Activated B cell treated with CpG ODN at 0.5 μM for 24 hours (primary cell): ENCODE measurements at regions of chr1 and their contacts with region 1.

Region 1: DNA sequence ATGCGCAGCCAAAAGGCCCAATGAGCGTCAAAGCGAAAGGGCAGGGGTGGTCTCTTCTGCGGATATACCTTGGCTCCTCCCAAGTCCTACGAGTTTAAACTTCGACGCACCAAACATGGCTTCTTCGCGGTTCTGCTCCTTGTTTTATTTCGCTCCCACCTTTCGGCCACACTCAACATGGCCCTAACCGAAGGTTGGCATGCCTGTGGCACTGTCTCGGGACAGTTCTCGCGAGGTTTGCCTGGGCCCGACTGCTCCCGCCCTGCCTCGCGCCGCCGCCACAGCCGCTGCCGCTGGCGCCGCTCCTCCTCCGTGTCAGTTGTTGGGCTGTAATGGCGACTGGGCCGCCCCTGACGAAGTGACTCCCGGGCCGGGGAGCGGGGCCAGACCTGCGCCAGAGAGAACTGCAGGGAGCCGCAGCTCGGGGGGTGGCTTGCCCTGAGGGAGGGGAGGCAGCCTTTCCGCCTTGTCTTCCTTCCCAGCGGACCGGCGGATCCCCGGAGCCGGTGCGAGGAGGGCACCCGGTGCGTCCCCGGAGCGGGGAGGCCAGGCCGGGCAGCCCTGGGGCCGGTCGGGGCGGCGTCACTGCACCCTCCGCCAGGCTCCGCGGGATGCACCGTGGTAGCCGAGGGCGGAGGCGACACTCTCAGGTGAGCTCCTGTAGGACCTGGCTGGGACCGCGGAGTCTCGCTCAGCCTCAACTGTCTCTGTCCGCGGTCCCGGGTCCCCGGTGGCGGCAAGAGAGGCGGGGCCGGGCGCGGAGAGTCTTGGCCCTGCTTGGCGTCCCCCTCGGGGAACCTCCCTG is at the start of gene CEP350:
- DNase-seq: peak; percentile 91
- ATAC-seq: peak; percentile 90
- H3K4me3 Mint-ChIP-seq: peak within 1 kb of the TSS; percentile 81
- H3K27ac Mint-ChIP-seq: peak within 1 kb of the TSS; percentile 90
- H3K4me1 Mint-ChIP-seq: peaks cover 57% of the 10 kb centered on the region
- H3K27me3 Mint-ChIP-seq: no peaks in the 10 kb centered on the region
- CTCF ChIP-seq: no peak
- total RNA-seq, gene CEP350: 60.8 and 63.9 TPM in 2 replicates

Region 2: GRCh38 chr1:179293340-179294327 is 661.1 kb before region 1 on chr1 and contains the start of gene SOAT1:
- CTCF ChIA-PET with region 1: no interaction called
- POLR2A ChIA-PET with region 1: interaction called, 3 read pairs
- intact Hi-C with region 1: loop called (anchors 10 kb)
- DNase-seq: peak; percentile 92
- ATAC-seq: peak; percentile 99
- H3K4me3 Mint-ChIP-seq: peak within 1 kb of the TSS; percentile 97
- H3K27ac Mint-ChIP-seq: peak within 1 kb of the TSS; percentile 93
- H3K4me1 Mint-ChIP-seq: peaks cover 44% of the 10 kb centered on the region
- H3K27me3 Mint-ChIP-seq: no peaks in the 10 kb centered on the region
- CTCF ChIP-seq: no peak
- total RNA-seq, gene SOAT1: 17.3 and 20.0 TPM in 2 replicates

Region 3: GRCh38 chr1:179728271-179728670 is 226.4 kb before region 1 on chr1:
- CTCF ChIA-PET with region 1: no interaction called
- POLR2A ChIA-PET with region 1: no interaction called
- intact Hi-C with region 1: no loop called
- DNase-seq: no peak
- ATAC-seq: no peak
- H3K4me3 Mint-ChIP-seq: no peak overlapping the region
- H3K27ac Mint-ChIP-seq: no peak overlapping the region
- H3K4me1 Mint-ChIP-seq: no peaks in the 10 kb centered on the region
- H3K27me3 Mint-ChIP-seq: peaks cover 14% of the 10 kb centered on the region
- CTCF ChIP-seq: no peak

Region 4: GRCh38 chr1:179882243-179883039 is 72.3 kb before region 1 on chr1 and contains the start of gene TOR1AIP1:
- CTCF ChIA-PET with region 1: interaction called, 5 read pairs
- POLR2A ChIA-PET with region 1: interaction called, 95 read pairs
- intact Hi-C with region 1: loop called (anchors 1 kb)
- DNase-seq: peak; percentile 96
- ATAC-seq: peak; percentile 76
- H3K4me3 Mint-ChIP-seq: peak within 1 kb of the TSS; percentile 100
- H3K27ac Mint-ChIP-seq: peak within 1 kb of the TSS; percentile 100
- H3K4me1 Mint-ChIP-seq: peaks cover 64% of the 10 kb centered on the region
- H3K27me3 Mint-ChIP-seq: no peaks in the 10 kb centered on the region
- CTCF ChIP-seq: no peak
- total RNA-seq, gene TOR1AIP1: 42.3 and 46.6 TPM in 2 replicates

Region 5: GRCh38 chr1:180003026-180003695 is 48.5 kb after region 1 on chr1:
- CTCF ChIA-PET with region 1: no interaction called
- POLR2A ChIA-PET with region 1: interaction called, 5 read pairs
- intact Hi-C with region 1: loop called (anchors 2 kb)
- DNase-seq: no peak
- ATAC-seq: peak; percentile 61
- H3K4me3 Mint-ChIP-seq: no peak overlapping the region
- H3K27ac Mint-ChIP-seq: peak overlapping the region; percentile 47
- H3K4me1 Mint-ChIP-seq: peaks cover 20% of the 10 kb centered on the region
- H3K27me3 Mint-ChIP-seq: no peaks in the 10 kb centered on the region
- CTCF ChIP-seq: no peak

Region 6: DNA sequence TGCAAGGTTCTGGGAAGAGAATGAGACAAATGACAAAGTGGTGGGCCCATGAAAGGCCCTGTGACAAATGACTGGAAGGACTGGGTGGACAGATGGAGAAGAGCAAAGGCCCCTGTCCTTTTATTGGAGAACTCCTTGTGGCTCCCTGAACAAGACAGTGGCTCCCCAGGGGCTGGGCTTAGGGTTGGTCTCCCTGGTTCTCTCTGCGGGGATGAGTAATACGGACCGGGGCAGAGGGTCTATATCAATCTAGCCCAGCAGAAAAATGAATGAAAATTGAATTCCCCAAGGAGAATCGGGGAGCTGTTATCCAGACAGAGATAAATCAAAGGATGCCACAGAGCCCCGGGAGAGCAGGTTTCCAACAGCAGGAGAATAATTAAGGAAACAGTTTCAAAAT is 270.2 kb after region 1 on chr1:
- CTCF ChIA-PET with region 1: no interaction called
- POLR2A ChIA-PET with region 1: no interaction called
- intact Hi-C with region 1: loop called (anchors 2 kb)
- DNase-seq: no peak
- ATAC-seq: no peak
- H3K4me3 Mint-ChIP-seq: no peak overlapping the region
- H3K27ac Mint-ChIP-seq: no peak overlapping the region
- H3K4me1 Mint-ChIP-seq: peaks cover 7% of the 10 kb centered on the region
- H3K27me3 Mint-ChIP-seq: peaks cover 53% of the 10 kb centered on the region
- CTCF ChIP-seq: no peak

Region 7: GRCh38 chr1:181206513-181206912 is 1251.8 kb after region 1 on chr1:
- CTCF ChIA-PET with region 1: no interaction called
- POLR2A ChIA-PET with region 1: no interaction called
- intact Hi-C with region 1: no loop called
- DNase-seq: no peak
- ATAC-seq: no peak
- H3K4me3 Mint-ChIP-seq: no peak overlapping the region
- H3K27ac Mint-ChIP-seq: no peak overlapping the region
- H3K4me1 Mint-ChIP-seq: no peaks in the 10 kb centered on the region
- H3K27me3 Mint-ChIP-seq: peaks cover 11% of the 10 kb centered on the region
- CTCF ChIP-seq: no peak